ENCODE measurements at regions of chr15 and their contacts with region 1.

Region 1: DNA sequence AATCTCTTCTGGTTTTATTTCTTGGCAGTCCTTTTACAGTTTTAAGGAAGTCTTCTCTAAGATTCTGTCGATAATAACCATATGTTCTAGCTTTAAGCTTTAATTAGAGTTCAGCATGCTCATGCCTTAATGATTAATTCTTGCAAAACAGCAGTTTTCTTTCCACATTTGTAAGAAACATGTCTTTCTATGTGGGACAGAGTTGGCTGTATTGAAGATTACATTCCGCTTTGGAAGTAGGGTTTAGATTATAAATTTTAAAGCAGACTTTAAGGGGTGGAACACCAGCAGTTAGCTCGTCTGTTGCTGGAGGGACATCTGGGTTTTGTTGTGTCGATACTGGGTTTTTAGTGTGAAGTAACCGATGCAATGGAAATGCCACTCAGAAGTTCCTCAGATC is 35.3 kb downstream of the SQOR start:
- DNase-seq: no peak
- H3K4me3 ChIP-seq: no peak overlapping the region
- H3K27ac ChIP-seq: peak overlapping the region; percentile 44
- H3K4me1 ChIP-seq: peaks cover 9% of the 10 kb centered on the region
- H3K27me3 ChIP-seq: no peaks in the 10 kb centered on the region
- CTCF ChIP-seq: no peak
- POLR2A ChIP-seq: no peak

Region 2: GRCh38 chr15:45634442-45635190 is 35.5 kb before region 1 on chr15 and contains the start of gene SQOR:
- CTCF ChIA-PET with region 1: interaction called, 3 read pairs
- POLR2A ChIA-PET with region 1: no interaction called
- dilution Hi-C with region 1: no loop called
- intact Hi-C with region 1: loop called (anchors 2 kb)
- DNase-seq: peak; percentile 77
- H3K4me3 ChIP-seq: peak within 1 kb of the TSS; percentile 52 to 88 (median 82)
- H3K27ac ChIP-seq: no peak within 1 kb of the TSS
- H3K4me1 ChIP-seq: peaks cover 20% of the 10 kb centered on the region
- H3K27me3 ChIP-seq: no peaks in the 10 kb centered on the region
- CTCF ChIP-seq: no peak
- POLR2A ChIP-seq: peak; percentile 68
- total RNA-seq, gene SQOR: 6.6 and 17.9 TPM in 2 replicates

Region 3: GRCh38 chr15:45689616-45690015 is 19.5 kb after region 1 on chr15:
- CTCF ChIA-PET with region 1: no interaction called
- POLR2A ChIA-PET with region 1: no interaction called
- dilution Hi-C with region 1: no loop called
- intact Hi-C with region 1: no loop called
- DNase-seq: no peak
- H3K4me3 ChIP-seq: no peak overlapping the region
- H3K27ac ChIP-seq: no peak overlapping the region
- H3K4me1 ChIP-seq: no peaks in the 10 kb centered on the region
- H3K27me3 ChIP-seq: no peaks in the 10 kb centered on the region
- CTCF ChIP-seq: no peak
- POLR2A ChIP-seq: no peak

Measured in endothelial cell of umbilical vein (primary cell).